Head of caudate nucleus (tissue), 42 donors: ENCODE measurements at regions of chr17 and their contacts with region 1.

Region 1: GRCh38 chr17:32971171-32971570 is 20.5 kb upstream of the SPACA3 start:
- DNase-seq: no peak

Region 2: GRCh38 chr17:33038740-33039139 is 67.6 kb after region 1 on chr17:
- intact Hi-C with region 1: loop called (anchors 10 kb)
- DNase-seq: peak in 34 of 42 donors; percentile 13 to 70 (median 45)